ENCODE measurements at regions of chr5 and their contacts with region 1.

Region 1: DNA sequence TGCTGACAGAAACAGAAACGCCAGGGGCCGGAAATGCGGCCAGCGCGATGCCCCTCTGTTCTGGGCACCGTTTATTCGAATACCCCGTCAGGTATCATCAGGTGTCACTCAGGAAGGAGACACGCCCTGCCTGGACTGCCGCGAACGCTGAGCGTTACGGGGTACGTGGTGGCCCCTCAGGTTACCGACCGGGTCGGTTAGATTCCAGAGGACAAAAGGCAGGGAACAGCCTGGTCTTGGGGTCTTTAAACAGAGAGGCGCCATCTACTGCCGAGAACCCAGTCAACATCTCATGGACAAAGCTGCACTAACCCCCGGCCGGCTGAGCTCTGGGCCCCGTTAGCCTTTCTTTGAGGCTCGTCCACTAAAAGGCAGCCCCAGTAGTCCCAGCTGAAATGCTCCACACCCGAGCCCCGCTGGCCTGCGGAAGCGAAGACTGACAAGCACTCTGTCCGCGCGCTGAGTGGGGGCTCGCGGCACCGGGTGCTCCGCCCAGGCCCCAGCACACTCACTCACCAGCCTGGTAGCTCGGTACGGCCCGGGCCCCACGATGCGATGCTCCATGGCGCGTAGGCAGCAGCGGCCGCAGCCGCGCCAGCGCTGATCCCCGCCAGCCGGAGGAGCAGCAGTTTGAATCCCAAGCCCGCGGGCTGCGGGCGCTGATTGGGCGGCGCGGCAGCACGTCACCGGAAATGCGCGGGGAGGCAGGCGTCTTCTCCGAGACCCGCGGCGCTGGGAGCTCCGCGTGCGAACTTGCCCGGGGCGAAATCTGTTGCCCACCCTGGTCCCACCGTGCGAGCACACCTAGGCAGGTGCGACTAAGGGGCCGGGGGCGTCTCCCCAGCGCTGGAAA is at the start of gene DEPDC1B:
- DNase-seq: peak; percentile 92
- CTCF ChIP-seq: peak; percentile 36

Region 2: GRCh38 chr5:60677844-60678664 is 21.7 kb before region 1 on chr5:
- CTCF ChIA-PET with region 1: interaction called, 17 read pairs
- POLR2A ChIA-PET with region 1: no interaction called
- DNase-seq: peak; percentile 35
- CTCF ChIP-seq: peak; percentile 50

Measured in GM10248 (cell line).